H1 (cell line): ENCODE measurements at regions of chrX and their contacts with region 1.

Region 1: DNA sequence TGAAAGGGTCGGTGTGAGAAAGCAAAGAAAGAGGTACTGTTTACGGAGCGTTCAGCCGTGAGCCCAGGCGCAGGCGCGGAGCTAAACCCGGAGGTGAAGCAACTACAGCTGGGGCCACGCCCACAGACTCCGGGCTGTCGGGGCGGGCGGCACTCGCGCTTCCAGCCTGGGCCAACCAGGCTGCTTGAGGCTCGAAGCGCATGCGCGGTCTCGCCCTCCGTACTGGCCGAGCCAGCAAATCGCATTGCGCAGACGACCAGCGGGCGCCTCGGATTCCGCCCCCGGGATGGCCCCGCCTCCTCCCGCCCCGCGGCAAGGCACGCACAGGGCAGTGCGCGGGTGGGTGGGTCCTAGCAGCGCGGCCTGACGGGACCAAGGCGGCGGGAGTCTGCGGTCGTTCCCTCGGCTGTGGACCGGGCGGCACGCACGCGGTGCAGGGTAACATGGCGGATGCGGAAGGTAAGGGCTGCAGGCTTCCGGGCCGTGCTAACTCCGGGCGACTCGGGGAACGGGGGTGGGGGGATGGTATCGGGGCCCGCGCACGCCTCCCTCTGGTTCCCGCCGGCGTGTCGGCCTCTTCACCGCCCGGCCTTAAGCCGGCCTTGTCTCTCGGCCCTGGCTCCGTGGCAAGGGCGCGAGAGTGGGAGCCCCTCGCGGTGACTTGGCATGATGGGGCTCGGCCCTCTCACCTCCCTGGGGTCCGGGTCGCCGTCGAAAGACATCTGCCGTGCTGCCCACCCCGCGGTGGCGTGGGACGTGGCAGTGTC is at the start of gene DKC1:
- DNase-seq: peak; percentile 87 to 91
- H3K4me3 ChIP-seq: peak within 1 kb of the TSS; percentile 47 to 94 (median 82)
- H3K27ac ChIP-seq: peak within 1 kb of the TSS; percentile 84
- H3K4me1 ChIP-seq: peaks cover 0 to 4% (median 2%) of the 10 kb centered on the region in 4 experiments; a peak in 3 of 7 replicates
- H3K27me3 ChIP-seq: no peaks in the 10 kb centered on the region
- CTCF ChIP-seq: no peak
- EP300 ChIP-seq: no peak
- POLR2A ChIP-seq: peak; percentile 60 to 66
- RAD21 ChIP-seq: no peak
- total RNA-seq, gene DKC1: 134 and 143 TPM in 2 replicates

Region 2: GRCh38 chrX:154317391-154317995 is 445.2 kb before region 1 on chrX:
- CTCF ChIA-PET with region 1: no interaction called
- POLR2A ChIA-PET with region 1: no interaction called
- DNase-seq: peak in 1 of 2 experiments; percentile 58
- H3K4me3 ChIP-seq: no peak overlapping the region
- H3K27ac ChIP-seq: no peak overlapping the region
- H3K4me1 ChIP-seq: no peaks in the 10 kb centered on the region
- H3K27me3 ChIP-seq: no peaks in the 10 kb centered on the region
- CTCF ChIP-seq: peak in 2 of 3 experiments; percentile 36 to 58; a peak in 3 of 4 replicates
- EP300 ChIP-seq: no peak
- POLR2A ChIP-seq: no peak
- RAD21 ChIP-seq: peak; percentile 27 to 47; a peak in 3 of 4 replicates

Region 3: DNA sequence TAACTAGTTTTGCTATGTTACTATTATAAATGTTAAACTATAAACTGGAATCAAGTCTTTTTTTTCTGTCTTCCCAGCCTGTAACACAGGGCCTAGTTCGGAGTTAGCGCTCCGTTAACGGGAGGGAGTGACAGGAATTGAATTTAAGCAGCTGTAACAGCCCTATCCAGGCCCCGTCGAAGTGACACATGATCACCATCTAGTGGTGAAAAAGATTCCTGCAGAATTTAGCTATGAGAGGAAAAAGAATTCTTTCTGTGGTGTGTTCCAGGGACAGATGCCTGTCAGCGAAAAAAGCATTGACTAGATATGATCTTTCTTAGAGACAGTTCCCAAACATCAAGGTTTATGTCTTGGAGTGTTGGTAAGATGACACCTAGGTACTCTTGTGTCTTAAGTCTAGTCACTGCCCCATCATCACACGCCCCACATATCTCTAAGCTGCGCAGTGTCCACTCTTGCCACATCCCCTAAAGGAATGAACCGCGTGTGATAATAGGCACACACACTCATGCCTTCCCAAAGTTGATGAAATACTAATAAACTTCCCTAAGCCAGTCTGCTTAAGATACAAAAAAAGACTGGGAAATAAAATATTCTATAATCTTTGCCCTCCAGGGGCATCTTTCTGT is 13.9 kb before region 1 on chrX:
- CTCF ChIA-PET with region 1: no interaction called
- POLR2A ChIA-PET with region 1: interaction called, 26 read pairs
- DNase-seq: no peak
- H3K4me3 ChIP-seq: no peak overlapping the region
- H3K27ac ChIP-seq: no peak overlapping the region
- H3K4me1 ChIP-seq: no peaks in the 10 kb centered on the region
- H3K27me3 ChIP-seq: peaks cover 8 to 29% (median 27%) of the 10 kb centered on the region in 4 experiments
- CTCF ChIP-seq: peak in 2 of 3 experiments; percentile 59 to 61; a peak in 3 of 4 replicates
- EP300 ChIP-seq: no peak
- POLR2A ChIP-seq: no peak
- RAD21 ChIP-seq: peak; percentile 73 to 76

Region 4: GRCh38 chrX:154775419-154776349 is 13.0 kb after region 1 on chrX:
- CTCF ChIA-PET with region 1: interaction called, 3 read pairs
- POLR2A ChIA-PET with region 1: interaction called, 146 read pairs
- DNase-seq: no peak
- H3K4me3 ChIP-seq: no peak overlapping the region
- H3K27ac ChIP-seq: no peak overlapping the region
- H3K4me1 ChIP-seq: no peaks in the 10 kb centered on the region
- H3K27me3 ChIP-seq: no peaks in the 10 kb centered on the region
- CTCF ChIP-seq: no peak
- EP300 ChIP-seq: no peak
- POLR2A ChIP-seq: peak in 1 of 2 experiments; percentile 20; a peak in 1 of 3 replicates
- RAD21 ChIP-seq: no peak